ENCODE measurements at regions of chrX and their contacts with region 1.

Region 1: DNA sequence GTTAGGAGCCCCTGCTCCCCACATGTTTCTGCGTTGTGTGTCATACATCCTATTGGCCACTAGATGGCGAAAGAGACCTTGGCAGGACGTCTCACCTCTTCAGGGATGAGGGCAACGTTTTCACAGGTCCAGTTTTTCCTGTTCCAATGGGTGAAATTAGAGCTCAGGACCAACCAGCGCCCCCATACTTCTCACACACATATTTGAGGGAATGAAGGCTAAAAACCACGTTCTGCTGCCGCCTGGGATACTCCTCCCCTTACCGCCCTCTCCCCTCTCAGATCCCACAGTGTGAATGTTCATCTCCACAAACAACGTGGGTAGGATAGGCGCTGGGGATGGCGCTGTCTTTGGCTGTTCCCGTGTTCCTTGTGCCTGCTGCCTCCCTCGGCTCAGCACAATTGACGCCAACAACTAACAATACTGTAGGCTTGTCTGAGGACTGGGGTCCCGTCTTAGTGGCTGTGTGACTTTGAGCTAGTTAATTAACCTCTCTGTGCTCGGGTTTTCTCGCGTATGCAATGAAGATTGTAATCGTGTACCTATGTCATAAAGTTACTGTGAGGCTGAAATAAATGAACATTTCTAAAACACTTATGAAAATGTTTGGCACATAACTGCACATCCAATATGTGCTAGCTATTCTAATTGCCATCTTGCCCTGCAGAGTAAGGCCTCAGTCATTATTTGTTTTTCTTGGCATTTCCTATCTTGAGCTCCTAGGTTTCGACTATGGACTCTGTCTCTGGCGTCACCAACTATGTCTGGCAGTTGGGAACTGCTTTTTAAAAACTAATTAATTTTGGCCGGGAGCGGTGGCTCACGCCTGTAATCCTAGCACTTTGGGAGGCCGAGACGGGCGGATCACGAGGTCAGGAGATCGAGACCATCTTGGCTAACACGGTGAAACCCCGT is 181.3 kb upstream of the STK26 start:
- DNase-seq: peak; percentile 50 to 66
- ATAC-seq: peak; percentile 88 to 99
- H3K4me3 ChIP-seq: no peak overlapping the region
- H3K27ac ChIP-seq: no peak overlapping the region
- H3K4me1 ChIP-seq: no peaks in the 10 kb centered on the region
- CTCF ChIP-seq: peak; percentile 67
- EP300 ChIP-seq: no peak
- POLR2A ChIP-seq: no peak
- RAD21 ChIP-seq: peak; percentile 76 to 84

Region 2: GRCh38 chrX:131830400-131831184 is 11.2 kb before region 1 on chrX:
- CTCF ChIA-PET with region 1: interaction called, 15 read pairs
- POLR2A ChIA-PET with region 1: no interaction called
- DNase-seq: peak in 1 of 2 experiments; percentile 75
- ATAC-seq: peak; percentile 66 to 94; a peak in 5 of 6 replicates
- H3K4me3 ChIP-seq: no peak overlapping the region
- H3K27ac ChIP-seq: peak overlapping the region in 1 of 2 experiments; percentile 66; a peak in 2 of 6 replicates
- H3K4me1 ChIP-seq: no peaks in the 10 kb centered on the region
- CTCF ChIP-seq: peak; percentile 33
- EP300 ChIP-seq: no peak
- POLR2A ChIP-seq: no peak
- RAD21 ChIP-seq: peak; percentile 57 to 61; a peak in 4 of 5 replicates

Region 3: DNA sequence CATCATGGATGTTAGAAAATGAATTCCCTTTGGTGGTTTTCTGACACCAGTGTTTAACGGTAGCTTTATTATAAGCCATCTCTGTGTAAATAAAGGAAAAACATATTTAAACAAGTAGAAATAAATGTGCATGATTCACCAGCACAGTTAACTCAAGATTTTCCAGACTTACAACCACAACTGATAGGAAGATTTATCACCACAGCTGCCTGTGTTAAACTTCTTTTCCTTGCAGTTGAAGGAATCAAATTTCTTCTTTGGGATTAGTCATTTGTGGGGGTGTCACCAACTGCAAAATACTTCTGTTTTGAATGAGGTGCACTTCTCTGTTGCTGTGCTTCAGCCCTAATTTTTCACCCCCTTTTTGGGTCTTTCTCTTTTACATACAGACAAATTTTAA is 53.2 kb after region 1 on chrX:
- CTCF ChIA-PET with region 1: no interaction called
- POLR2A ChIA-PET with region 1: no interaction called
- DNase-seq: no peak
- ATAC-seq: no peak
- H3K4me3 ChIP-seq: no peak overlapping the region
- H3K27ac ChIP-seq: no peak overlapping the region
- H3K4me1 ChIP-seq: no peaks in the 10 kb centered on the region
- CTCF ChIP-seq: no peak
- EP300 ChIP-seq: no peak
- POLR2A ChIP-seq: no peak
- RAD21 ChIP-seq: no peak

Region 4: DNA sequence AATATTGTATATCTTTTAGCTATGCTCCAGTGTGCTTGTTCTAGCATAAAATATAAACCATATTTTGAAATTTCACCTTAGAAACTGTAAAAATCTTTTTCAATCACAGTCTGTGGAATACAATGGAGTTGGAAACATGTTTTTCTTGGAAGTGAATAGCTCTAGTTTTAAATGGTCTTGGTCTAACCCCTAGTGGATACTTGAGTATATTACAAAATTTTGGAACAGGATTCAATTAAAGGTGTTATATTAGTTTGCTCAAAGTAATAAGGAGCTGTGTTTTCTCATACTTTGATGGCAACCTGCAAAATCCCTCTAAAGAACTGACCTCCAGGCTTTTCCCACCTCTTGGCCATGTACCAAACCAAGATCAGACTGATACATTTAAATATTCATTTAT is 229.5 kb after region 1 on chrX:
- CTCF ChIA-PET with region 1: interaction called, 12 read pairs
- POLR2A ChIA-PET with region 1: no interaction called
- DNase-seq: peak; percentile 11
- ATAC-seq: peak in 1 of 2 experiments; percentile 65; a peak in 2 of 6 replicates
- H3K4me3 ChIP-seq: no peak overlapping the region
- H3K27ac ChIP-seq: no peak overlapping the region
- H3K4me1 ChIP-seq: no peaks in the 10 kb centered on the region
- CTCF ChIP-seq: peak; percentile 36; the same call in 2 of the 3 replicates
- EP300 ChIP-seq: no peak
- POLR2A ChIP-seq: no peak
- RAD21 ChIP-seq: peak; percentile 48 to 50

Region 5: GRCh38 chrX:132219343-132219768 is 377.6 kb after region 1 on chrX and contains the start of gene RAP2C:
- CTCF ChIA-PET with region 1: interaction called, 25 read pairs
- POLR2A ChIA-PET with region 1: interaction called, 4 read pairs
- DNase-seq: peak; percentile 75 to 82
- ATAC-seq: peak; percentile 77 to 81
- H3K4me3 ChIP-seq: peak within 1 kb of the TSS; percentile 89
- H3K27ac ChIP-seq: peak within 1 kb of the TSS; percentile 98 to 100
- H3K4me1 ChIP-seq: peaks cover 11% of the 10 kb centered on the region; the same call in 2 of the 3 replicates
- CTCF ChIP-seq: peak; percentile 52
- EP300 ChIP-seq: no peak
- POLR2A ChIP-seq: no peak
- RAD21 ChIP-seq: peak; percentile 44 to 51; a peak in 4 of 5 replicates
- polyA plus RNA-seq, gene RAP2C: 26.2 and 27.2 TPM in 2 replicates